MCF 10A (cell line): ENCODE measurements at regions of chr7 and their contacts with region 1.

Region 1: DNA sequence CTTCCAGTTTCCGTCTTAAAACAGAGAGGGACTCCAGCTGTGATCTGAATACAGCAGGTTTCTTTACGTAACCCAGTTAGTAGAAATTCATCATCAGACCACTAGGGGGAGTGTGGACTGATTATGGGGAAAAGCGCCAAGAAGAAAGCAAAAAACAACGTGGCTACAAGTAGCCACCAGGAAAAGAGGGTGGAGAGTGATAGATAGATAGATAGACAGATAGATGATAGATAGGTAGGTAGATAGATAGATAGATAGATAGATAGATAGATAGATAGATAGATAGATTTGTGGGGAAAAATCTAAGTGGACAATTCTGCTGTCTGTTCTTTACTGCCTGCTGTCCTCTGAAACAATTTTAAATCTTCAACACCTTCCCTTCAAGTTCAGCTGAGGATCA is 12.7 kb upstream of the AKR1B10 start:
- DNase-seq: peak; percentile 87
- H3K4me3 Mint-ChIP-seq: no peak overlapping the region
- H3K27ac Mint-ChIP-seq: no peak overlapping the region
- H3K4me1 Mint-ChIP-seq: peaks cover 29% of the 10 kb centered on the region
- H3K27me3 Mint-ChIP-seq: no peaks in the 10 kb centered on the region
- CTCF ChIP-seq: peak; percentile 77

Region 2: DNA sequence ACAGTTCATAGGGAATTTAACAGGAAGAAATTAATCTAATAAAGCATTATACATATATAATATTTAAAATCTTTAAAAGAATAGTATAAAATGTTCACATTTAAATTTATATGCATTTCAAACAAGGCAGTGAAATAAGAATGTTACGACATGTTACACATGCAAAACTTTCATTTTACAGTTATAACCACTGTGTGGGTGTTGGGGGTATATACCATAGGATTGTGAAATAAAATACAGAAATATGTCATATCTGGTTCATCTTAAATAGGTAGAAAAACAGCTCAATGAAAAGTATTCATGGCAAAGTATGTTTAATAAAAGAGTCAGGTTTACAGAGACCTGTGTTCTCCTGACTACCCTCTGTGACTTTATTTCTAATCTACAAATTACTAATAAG is 1478.4 kb before region 1 on chr7:
- CTCF ChIA-PET with region 1: no interaction called
- POLR2A ChIA-PET with region 1: no interaction called
- intact Hi-C with region 1: no loop called
- DNase-seq: no peak
- H3K4me3 Mint-ChIP-seq: no peak overlapping the region
- H3K27ac Mint-ChIP-seq: no peak overlapping the region
- H3K4me1 Mint-ChIP-seq: no peaks in the 10 kb centered on the region
- H3K27me3 Mint-ChIP-seq: no peaks in the 10 kb centered on the region
- CTCF ChIP-seq: no peak

Region 3: DNA sequence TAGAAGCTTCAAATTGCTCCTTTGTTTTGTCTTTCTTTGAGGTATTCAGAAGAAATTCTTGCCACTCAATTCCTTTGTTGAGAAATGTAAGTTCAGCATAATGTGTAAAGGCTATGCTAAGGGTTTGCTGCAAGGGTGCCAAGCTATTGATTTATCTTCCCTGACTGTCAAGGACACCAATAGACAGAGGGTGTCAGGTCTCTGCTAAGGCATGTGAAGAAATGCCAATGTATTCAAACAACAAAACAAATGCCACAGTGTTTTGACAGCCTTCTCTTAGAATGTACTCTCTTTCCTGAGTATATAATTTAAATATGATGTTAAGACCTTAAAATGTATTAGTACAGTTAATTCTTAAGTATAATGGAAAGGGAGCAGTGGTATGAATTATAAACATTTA is 325.1 kb before region 1 on chr7:
- CTCF ChIA-PET with region 1: no interaction called
- POLR2A ChIA-PET with region 1: no interaction called
- intact Hi-C with region 1: no loop called
- DNase-seq: no peak
- H3K4me3 Mint-ChIP-seq: no peak overlapping the region
- H3K27ac Mint-ChIP-seq: no peak overlapping the region
- H3K4me1 Mint-ChIP-seq: peaks cover 6% of the 10 kb centered on the region
- H3K27me3 Mint-ChIP-seq: no peaks in the 10 kb centered on the region
- CTCF ChIP-seq: no peak

Region 4: DNA sequence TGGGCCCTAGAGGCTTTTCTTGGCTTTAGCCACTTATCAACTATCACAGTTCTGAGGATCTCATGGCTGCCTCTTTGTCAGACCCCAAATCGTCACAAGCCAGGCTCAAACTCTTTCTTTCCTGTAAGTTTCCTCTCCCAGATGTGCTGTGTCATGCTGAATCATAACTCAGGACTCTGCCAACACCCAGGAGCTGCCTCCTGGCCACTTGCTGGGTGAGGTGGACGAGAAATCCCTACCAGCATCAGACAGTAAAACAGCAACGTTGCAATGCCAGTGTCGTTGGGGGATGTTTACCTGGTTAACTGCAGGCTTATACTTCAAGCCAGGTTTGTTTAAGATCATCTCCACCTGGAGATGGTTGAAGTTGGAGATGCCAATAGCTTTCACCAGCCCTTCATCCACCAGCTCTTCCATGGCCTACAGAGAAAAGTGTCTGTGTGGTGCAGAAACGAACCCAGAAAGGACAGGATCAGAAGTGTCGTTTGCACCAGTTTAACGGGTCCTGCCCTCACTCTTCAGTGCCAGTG is 65.9 kb before region 1 on chr7:
- CTCF ChIA-PET with region 1: interaction called, 22 read pairs
- POLR2A ChIA-PET with region 1: no interaction called
- intact Hi-C with region 1: loop called (anchors 1 kb)
- DNase-seq: peak; percentile 83
- H3K4me3 Mint-ChIP-seq: no peak overlapping the region
- H3K27ac Mint-ChIP-seq: peak overlapping the region; percentile 89
- H3K4me1 Mint-ChIP-seq: peaks cover 25% of the 10 kb centered on the region
- H3K27me3 Mint-ChIP-seq: no peaks in the 10 kb centered on the region
- CTCF ChIP-seq: no peak

Region 5: GRCh38 chr7:134480736-134481135 is 33.9 kb before region 1 on chr7:
- CTCF ChIA-PET with region 1: interaction called, 9 read pairs
- POLR2A ChIA-PET with region 1: interaction called, 4 read pairs
- intact Hi-C with region 1: loop called (anchors 2 kb)
- DNase-seq: peak; percentile 67
- H3K4me3 Mint-ChIP-seq: no peak overlapping the region
- H3K27ac Mint-ChIP-seq: no peak overlapping the region
- H3K4me1 Mint-ChIP-seq: peaks cover 15% of the 10 kb centered on the region
- H3K27me3 Mint-ChIP-seq: no peaks in the 10 kb centered on the region
- CTCF ChIP-seq: no peak

Region 6: GRCh38 chr7:134533288-134533771 is 18.7 kb after region 1 on chr7:
- CTCF ChIA-PET with region 1: interaction called, 10 read pairs
- POLR2A ChIA-PET with region 1: interaction called, 11 read pairs
- intact Hi-C with region 1: no loop called
- DNase-seq: peak; percentile 54
- H3K4me3 Mint-ChIP-seq: peak overlapping the region; percentile 40
- H3K27ac Mint-ChIP-seq: peak overlapping the region; percentile 92
- H3K4me1 Mint-ChIP-seq: peaks cover 37% of the 10 kb centered on the region
- H3K27me3 Mint-ChIP-seq: no peaks in the 10 kb centered on the region
- CTCF ChIP-seq: no peak

Region 7: GRCh38 chr7:134553976-134554375 is 39.3 kb after region 1 on chr7:
- CTCF ChIA-PET with region 1: interaction called, 71 read pairs
- POLR2A ChIA-PET with region 1: interaction called, 9 read pairs
- intact Hi-C with region 1: no loop called
- DNase-seq: peak; percentile 45
- H3K4me3 Mint-ChIP-seq: no peak overlapping the region
- H3K27ac Mint-ChIP-seq: no peak overlapping the region
- H3K4me1 Mint-ChIP-seq: peaks cover 3% of the 10 kb centered on the region
- H3K27me3 Mint-ChIP-seq: no peaks in the 10 kb centered on the region
- CTCF ChIP-seq: no peak

Region 8: GRCh38 chr7:134710859-134711624 is 196.4 kb after region 1 on chr7:
- CTCF ChIA-PET with region 1: no interaction called
- POLR2A ChIA-PET with region 1: no interaction called
- intact Hi-C with region 1: no loop called
- DNase-seq: no peak
- H3K4me3 Mint-ChIP-seq: no peak overlapping the region
- H3K27ac Mint-ChIP-seq: no peak overlapping the region
- H3K4me1 Mint-ChIP-seq: no peaks in the 10 kb centered on the region
- H3K27me3 Mint-ChIP-seq: no peaks in the 10 kb centered on the region
- CTCF ChIP-seq: no peak